OCI-LY7 (cell line): ENCODE measurements at regions of chr12 and their contacts with region 1.

Region 1: GRCh38 chr12:117836999-117837736 is 131.6 kb downstream of the KSR2 start:
- DNase-seq: peak; percentile 66
- H3K4me3 ChIP-seq: no peak overlapping the region
- H3K27ac ChIP-seq: no peak overlapping the region
- H3K4me1 ChIP-seq: no peaks in the 10 kb centered on the region
- CTCF ChIP-seq: peak; percentile 97

Region 2: GRCh38 chr12:117212563-117213190 is 624.5 kb before region 1 on chr12:
- CTCF ChIA-PET with region 1: no interaction called
- POLR2A ChIA-PET with region 1: no interaction called
- intact Hi-C with region 1: loop called (anchors 10 kb)
- DNase-seq: peak; percentile 62
- H3K4me3 ChIP-seq: no peak overlapping the region
- H3K27ac ChIP-seq: no peak overlapping the region
- H3K4me1 ChIP-seq: no peaks in the 10 kb centered on the region
- CTCF ChIP-seq: peak; percentile 94

Region 3: DNA sequence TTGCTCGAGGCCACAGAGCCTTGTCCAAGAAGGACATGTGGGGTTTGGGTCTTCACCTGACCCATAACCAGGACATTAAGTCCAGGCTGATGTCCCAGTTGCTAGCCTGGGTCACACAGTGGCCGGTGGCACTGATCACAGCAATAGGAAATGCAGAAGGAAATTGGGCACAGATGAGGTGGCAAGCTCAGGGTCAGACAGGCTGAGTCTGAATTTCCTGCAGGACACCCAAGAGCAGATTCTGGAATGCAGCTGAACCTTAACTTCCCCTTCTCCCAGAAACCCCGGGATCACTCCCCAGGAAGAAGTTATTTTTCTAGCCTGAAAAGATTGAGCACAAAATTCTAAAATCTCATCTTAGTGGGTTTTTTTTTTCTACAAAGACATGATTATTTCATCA is 68.3 kb before region 1 on chr12:
- CTCF ChIA-PET with region 1: no interaction called
- POLR2A ChIA-PET with region 1: no interaction called
- intact Hi-C with region 1: no loop called
- DNase-seq: no peak
- H3K4me3 ChIP-seq: no peak overlapping the region
- H3K27ac ChIP-seq: no peak overlapping the region
- H3K4me1 ChIP-seq: no peaks in the 10 kb centered on the region
- CTCF ChIP-seq: no peak